MCF 10A (cell line): ENCODE measurements at regions of chr4 and their contacts with region 1.

Region 1: DNA sequence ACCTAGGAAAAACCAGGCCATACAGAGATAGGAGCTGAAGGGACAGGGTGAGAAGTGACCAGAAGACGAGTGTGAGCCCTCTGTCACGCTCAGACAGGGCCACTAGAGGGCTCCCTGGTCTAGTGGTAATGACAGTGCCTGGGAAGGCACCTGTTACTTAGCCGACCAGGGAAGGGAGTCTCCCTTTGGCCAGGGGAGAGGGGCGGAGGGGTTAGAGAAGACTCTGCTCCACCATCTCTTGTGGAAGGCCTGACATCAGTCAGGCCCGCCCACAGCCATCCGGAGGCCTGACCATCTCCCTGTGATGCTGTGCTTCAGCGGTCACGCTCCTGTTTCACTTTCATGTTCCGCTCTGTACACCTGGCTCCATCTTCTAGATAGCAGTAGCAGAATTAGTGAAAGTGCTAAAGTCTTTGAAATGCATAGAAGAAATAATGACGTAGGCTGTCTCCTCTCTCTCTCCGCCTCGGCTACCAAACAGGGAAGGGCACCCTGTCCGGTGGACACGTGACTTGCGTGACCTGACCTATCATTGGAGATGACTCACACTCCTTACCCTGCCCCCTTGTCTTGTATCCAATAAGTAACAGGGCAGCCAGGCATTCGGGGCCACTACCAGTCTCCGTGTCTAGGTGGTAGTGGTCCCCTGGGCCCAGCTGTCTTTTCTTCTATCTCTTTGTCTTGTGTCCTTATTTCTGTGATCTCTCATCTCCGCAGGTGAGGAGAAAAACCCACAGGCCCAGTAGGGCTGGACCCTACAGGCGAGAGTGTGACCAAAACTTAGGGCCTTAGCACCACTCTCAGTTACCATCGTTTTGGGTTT is 26.7 kb downstream of the HTT-AS start:
- DNase-seq: peak; percentile 73
- H3K4me3 Mint-ChIP-seq: peak overlapping the region; percentile 32
- H3K27ac Mint-ChIP-seq: no peak overlapping the region
- H3K4me1 Mint-ChIP-seq: peaks cover 8% of the 10 kb centered on the region
- H3K27me3 Mint-ChIP-seq: peaks cover 35% of the 10 kb centered on the region
- CTCF ChIP-seq: peak; percentile 80

Region 2: DNA sequence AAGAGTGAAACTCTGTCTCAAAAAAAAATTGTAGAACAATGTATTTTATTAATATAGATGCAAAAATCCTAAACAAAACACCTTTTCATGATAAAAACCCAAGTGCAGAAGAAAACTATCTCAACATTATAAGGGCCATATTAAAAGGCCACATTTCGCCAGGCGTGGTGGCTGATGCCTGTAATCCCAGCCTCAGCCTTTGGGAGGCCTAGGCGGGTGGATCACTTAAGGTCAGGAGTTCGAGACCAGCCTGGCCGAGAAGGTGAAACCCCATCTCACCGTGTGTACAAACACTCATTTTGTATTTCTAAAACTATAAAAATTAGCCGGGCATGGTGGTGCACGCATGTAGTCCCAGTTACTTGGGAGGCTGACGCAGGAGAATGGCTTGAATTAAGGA is 521.1 kb before region 1 on chr4:
- CTCF ChIA-PET with region 1: no interaction called
- POLR2A ChIA-PET with region 1: no interaction called
- intact Hi-C with region 1: no loop called
- DNase-seq: no peak
- H3K4me3 Mint-ChIP-seq: no peak overlapping the region
- H3K27ac Mint-ChIP-seq: no peak overlapping the region
- H3K4me1 Mint-ChIP-seq: no peaks in the 10 kb centered on the region
- H3K27me3 Mint-ChIP-seq: no peaks in the 10 kb centered on the region
- CTCF ChIP-seq: peak; percentile 9

Region 3: GRCh38 chr4:3062471-3062870 is 14.8 kb after region 1 on chr4:
- CTCF ChIA-PET with region 1: interaction called, 10 read pairs
- POLR2A ChIA-PET with region 1: interaction called, 3 read pairs
- intact Hi-C with region 1: no loop called
- DNase-seq: no peak
- H3K4me3 Mint-ChIP-seq: no peak overlapping the region
- H3K27ac Mint-ChIP-seq: no peak overlapping the region
- H3K4me1 Mint-ChIP-seq: peaks cover 6% of the 10 kb centered on the region
- H3K27me3 Mint-ChIP-seq: peaks cover 35% of the 10 kb centered on the region
- CTCF ChIP-seq: no peak